MCF 10A (cell line): ENCODE measurements at regions of chr3 and their contacts with region 1.

Region 1: DNA sequence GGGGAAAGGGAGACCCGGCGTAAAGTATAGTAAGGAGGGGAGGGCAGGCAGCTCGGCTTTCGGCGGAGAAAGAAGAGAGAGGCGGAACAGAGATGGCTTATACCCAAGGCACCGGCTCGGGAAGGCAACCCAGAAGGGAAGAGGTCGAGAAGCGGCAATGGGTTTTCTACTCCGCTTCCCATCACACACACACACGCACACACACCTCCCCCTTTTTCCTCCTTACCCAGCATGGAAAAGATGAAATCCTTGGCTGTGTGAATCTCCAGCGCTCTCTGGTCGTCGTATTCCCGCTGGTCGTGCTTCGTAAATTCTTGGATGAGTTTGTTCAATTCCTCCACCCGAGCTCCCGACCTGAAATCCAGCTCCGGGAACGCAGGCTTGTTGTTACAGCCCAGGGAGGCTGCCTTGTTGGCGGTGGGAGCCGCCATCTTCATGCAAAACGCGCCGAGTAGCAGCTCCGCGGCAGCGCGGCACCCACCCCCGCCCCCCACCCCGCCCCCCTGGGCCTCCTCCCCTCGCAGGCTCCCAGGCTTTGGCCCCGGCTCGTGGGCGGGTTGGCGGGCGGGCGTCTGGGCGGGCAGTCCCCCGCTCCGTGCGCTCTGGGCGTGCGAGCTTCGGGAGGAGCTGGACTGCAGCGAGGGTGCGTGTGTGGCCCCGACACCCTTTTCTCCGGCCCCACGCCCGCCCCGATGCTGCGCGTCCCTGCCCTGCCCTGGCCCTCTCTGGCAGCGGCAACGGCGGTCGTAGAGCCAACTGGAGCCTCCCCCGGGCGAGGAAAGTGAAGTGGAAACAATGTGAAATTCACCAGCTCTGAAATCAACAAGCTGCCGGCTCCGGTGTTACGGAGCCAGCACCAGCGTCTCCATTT is at the start of gene MB21D2:
- DNase-seq: peak; percentile 72
- H3K4me3 Mint-ChIP-seq: peak within 1 kb of the TSS; percentile 85
- H3K27ac Mint-ChIP-seq: peak within 1 kb of the TSS; percentile 35
- H3K4me1 Mint-ChIP-seq: peaks cover 22% of the 10 kb centered on the region
- H3K27me3 Mint-ChIP-seq: no peaks in the 10 kb centered on the region
- CTCF ChIP-seq: no peak
- total RNA-seq, gene MB21D2: 3.6 and 4.4 TPM in 2 replicates

Region 2: DNA sequence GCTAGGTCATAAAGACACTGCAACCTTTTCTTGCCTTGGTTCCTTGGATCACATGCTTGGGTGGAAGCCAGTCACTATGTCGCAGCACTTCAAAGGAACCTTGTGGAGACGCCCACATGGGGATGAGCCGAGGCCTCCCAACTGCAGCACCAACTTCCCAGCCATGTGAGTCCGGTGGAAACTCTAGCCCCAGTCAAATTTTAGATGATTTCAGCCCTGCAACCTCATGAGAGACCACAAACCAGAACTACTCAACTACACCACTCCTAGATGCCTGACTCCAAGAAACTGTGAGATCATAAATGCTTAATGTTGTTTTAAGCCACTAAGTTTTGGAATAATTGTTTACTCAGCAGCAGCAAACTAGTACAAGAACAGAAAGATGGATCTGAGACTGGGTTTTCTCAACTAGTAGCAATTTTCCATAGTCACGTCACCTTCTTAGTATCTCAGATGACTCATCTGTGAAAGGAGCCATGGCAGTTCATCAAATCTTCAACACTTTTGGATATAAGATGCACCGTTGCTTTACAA is 86.5 kb before region 1 on chr3:
- CTCF ChIA-PET with region 1: interaction called, 3 read pairs
- POLR2A ChIA-PET with region 1: interaction called, 3 read pairs
- intact Hi-C with region 1: loop called (anchors 5 kb)
- DNase-seq: peak; percentile 47
- H3K4me3 Mint-ChIP-seq: no peak overlapping the region
- H3K27ac Mint-ChIP-seq: no peak overlapping the region
- H3K4me1 Mint-ChIP-seq: peaks cover 38% of the 10 kb centered on the region
- H3K27me3 Mint-ChIP-seq: no peaks in the 10 kb centered on the region
- CTCF ChIP-seq: no peak

Region 3: GRCh38 chr3:192851821-192852424 is 65.7 kb before region 1 on chr3:
- CTCF ChIA-PET with region 1: interaction called, 3 read pairs
- POLR2A ChIA-PET with region 1: interaction called, 29 read pairs
- intact Hi-C with region 1: loop called (anchors 1 kb)
- DNase-seq: peak; percentile 98
- H3K4me3 Mint-ChIP-seq: peak overlapping the region; percentile 19
- H3K27ac Mint-ChIP-seq: no peak overlapping the region
- H3K4me1 Mint-ChIP-seq: peaks cover 23% of the 10 kb centered on the region
- H3K27me3 Mint-ChIP-seq: peaks cover 19% of the 10 kb centered on the region
- CTCF ChIP-seq: no peak

Region 4: DNA sequence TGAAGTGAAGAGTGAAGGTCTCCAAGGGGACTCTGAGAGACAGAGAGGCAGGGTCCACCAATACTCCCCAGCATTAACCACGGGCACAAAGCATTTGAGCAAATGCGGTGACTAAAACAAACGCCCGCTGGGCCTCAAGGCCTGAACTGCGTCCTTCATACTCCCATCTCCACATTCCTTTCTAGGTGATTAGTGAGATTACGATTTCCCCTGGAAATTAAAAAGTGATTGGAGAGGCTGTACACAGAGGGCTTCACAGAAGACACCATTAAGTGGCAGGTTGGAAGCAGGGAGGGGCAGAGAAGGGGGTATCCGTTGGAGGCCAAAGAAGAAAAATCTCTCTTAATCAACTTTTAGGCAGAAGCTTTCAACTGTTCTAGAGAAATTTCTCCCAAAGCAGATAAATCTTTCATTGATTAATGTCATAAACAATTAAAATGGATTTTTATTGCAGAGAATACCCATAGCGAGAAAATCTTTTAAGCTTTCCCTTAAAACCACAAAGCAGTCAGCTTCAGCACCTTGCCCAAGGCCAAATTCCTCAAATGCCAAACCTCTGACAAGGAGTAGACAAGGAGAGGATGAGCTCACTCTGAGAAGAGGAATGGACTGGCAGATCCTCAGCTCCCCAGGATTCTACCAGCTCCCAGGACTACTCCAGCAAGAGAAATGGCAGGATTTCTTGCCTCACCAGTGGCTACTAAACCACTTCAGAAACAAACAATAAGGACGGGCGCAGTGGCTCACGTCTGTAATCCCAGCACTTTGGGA is 38.1 kb before region 1 on chr3:
- CTCF ChIA-PET with region 1: interaction called, 3 read pairs
- POLR2A ChIA-PET with region 1: interaction called, 8 read pairs
- intact Hi-C with region 1: loop called (anchors 2 kb)
- DNase-seq: peak; percentile 97
- H3K4me3 Mint-ChIP-seq: peak overlapping the region; percentile 51
- H3K27ac Mint-ChIP-seq: peak overlapping the region; percentile 14
- H3K4me1 Mint-ChIP-seq: peaks cover 34% of the 10 kb centered on the region
- H3K27me3 Mint-ChIP-seq: no peaks in the 10 kb centered on the region
- CTCF ChIP-seq: no peak

Region 5: GRCh38 chr3:192887047-192887446 is 30.6 kb before region 1 on chr3:
- CTCF ChIA-PET with region 1: interaction called, 7 read pairs
- POLR2A ChIA-PET with region 1: interaction called, 14 read pairs
- intact Hi-C with region 1: no loop called
- DNase-seq: peak; percentile 57
- H3K4me3 Mint-ChIP-seq: peak overlapping the region; percentile 47
- H3K27ac Mint-ChIP-seq: peak overlapping the region; percentile 57
- H3K4me1 Mint-ChIP-seq: peaks cover 45% of the 10 kb centered on the region
- H3K27me3 Mint-ChIP-seq: no peaks in the 10 kb centered on the region
- CTCF ChIP-seq: no peak

Region 6: DNA sequence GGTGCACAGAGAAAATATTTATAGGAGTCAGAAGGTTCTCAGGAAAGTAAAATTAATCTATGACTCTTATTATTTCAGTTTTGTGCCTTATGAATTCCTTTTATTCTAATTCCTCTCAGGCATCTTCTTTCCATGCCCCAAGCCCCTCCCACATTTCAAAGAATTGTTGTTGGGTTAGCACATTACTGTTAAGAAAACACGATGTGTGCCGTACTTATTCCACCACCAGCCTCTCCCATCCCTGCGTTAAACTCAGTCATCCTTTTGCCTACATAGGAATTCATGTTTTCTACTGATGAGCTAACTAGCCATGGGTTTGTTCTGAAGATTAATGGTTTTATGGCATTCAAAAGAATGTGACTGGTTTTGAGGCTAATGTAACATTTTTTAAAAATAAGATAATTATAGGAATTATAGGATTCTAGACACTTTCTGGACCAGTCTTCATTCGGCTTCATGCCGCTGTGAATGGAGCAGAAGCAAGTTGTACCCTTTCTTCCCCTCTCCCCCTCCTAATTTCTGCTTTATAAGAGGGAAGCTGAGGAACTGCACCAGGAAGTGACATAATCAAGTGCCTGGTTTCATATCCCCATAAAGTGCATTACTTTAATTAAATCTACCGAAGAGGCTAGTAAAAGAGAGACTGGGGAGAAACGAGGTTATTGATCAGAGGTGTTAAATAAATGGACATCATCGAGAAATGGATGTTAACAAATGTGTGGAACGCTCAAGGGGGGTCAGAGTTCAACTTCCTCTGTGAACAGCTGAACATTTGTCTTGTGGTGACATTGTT is 12.3 kb after region 1 on chr3:
- CTCF ChIA-PET with region 1: interaction called, 5 read pairs
- POLR2A ChIA-PET with region 1: interaction called, 17 read pairs
- intact Hi-C with region 1: no loop called
- DNase-seq: no peak
- H3K4me3 Mint-ChIP-seq: no peak overlapping the region
- H3K27ac Mint-ChIP-seq: no peak overlapping the region
- H3K4me1 Mint-ChIP-seq: peaks cover 6% of the 10 kb centered on the region
- H3K27me3 Mint-ChIP-seq: no peaks in the 10 kb centered on the region
- CTCF ChIP-seq: no peak

Region 7: GRCh38 chr3:192993411-192993810 is 75.8 kb after region 1 on chr3:
- CTCF ChIA-PET with region 1: no interaction called
- POLR2A ChIA-PET with region 1: no interaction called
- intact Hi-C with region 1: no loop called
- DNase-seq: no peak
- H3K4me3 Mint-ChIP-seq: no peak overlapping the region
- H3K27ac Mint-ChIP-seq: no peak overlapping the region
- H3K4me1 Mint-ChIP-seq: peaks cover 4% of the 10 kb centered on the region
- H3K27me3 Mint-ChIP-seq: no peaks in the 10 kb centered on the region
- CTCF ChIP-seq: no peak

Region 8: DNA sequence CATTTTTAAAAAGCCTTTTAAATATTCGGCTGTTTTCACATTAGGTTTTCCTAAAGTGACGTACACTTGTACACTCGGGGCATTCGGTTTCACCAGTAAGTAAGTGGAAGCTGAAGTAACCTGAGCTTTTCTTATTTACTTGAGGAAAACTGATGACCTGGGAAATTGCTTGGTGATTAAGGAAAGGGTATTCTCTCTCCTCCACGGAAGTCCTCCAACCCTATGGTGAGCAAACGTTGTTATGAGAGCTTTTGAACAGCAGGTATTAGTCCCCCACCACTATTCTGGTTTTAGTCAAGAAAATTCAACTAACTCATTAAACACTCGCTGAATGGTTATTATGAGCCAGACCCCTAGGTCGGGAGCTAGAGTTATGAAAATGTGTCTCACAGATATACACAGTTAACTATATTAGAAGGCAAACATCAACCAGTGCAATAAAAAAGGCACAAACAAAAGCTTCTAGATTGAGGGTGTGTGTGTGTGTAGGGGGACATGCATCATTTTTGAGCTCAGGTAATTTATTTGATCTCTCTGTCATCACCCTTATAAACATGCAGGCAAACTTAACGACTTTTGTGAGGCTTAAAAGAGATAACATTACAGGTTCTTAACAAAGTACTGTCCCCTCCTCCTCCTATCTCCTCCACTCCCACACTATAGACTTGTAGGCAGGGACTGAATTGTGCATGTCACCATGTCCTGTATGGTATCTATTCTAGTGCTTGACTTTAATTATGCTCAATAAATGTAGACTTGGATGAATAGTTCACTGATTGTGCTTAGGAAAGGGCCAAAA is 143.3 kb after region 1 on chr3:
- CTCF ChIA-PET with region 1: no interaction called
- POLR2A ChIA-PET with region 1: no interaction called
- intact Hi-C with region 1: no loop called
- DNase-seq: no peak
- H3K4me3 Mint-ChIP-seq: no peak overlapping the region
- H3K27ac Mint-ChIP-seq: no peak overlapping the region
- H3K4me1 Mint-ChIP-seq: no peaks in the 10 kb centered on the region
- H3K27me3 Mint-ChIP-seq: peaks cover 71% of the 10 kb centered on the region
- CTCF ChIP-seq: no peak